Activated CD4-positive, alpha-beta memory T cell treated with anti-CD3 and anti-CD28 coated beads for 36 hours (primary cell): ENCODE measurements at regions of chr10 and their contacts with region 1.

Region 1: DNA sequence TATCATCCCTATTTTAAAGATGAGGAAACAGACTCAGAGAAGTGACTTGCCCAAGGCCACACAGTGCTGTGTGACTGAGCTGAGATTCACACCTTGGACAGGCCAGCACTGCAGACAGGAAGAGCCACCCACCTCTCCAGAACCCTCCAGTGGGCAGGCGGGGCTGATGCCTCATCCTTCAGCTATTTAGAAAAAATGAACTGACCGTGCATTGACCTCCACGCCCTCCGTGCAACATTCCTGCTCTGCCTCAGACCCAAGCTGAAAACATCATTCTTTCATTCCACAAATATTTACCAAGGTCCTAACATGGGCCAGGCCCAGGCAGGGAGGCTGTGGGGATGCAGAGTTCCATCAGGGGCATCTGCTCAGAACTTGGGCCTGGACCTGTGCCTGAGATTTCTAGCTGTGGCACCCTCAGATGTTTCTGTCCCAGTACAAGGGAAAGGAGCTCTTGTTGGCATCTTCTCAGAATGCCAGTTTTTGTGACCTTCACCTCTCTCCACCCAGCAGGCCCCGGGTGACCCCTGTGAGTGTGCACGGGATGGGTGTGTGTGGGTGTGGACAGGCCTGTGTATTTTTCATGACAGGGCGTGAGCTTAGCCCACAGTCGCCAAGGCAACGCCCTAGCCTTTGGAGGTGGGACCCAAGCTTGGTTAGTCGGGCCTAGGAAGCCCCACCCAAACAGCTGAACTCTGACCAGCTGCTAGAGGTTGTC is 6.5 kb downstream of the VSIR start:
- DNase-seq: peak; percentile 65
- H3K4me3 Mint-ChIP-seq: peak overlapping the region; percentile 38
- H3K27ac Mint-ChIP-seq: peak overlapping the region; percentile 96
- H3K4me1 Mint-ChIP-seq: peaks cover 93% of the 10 kb centered on the region
- H3K27me3 Mint-ChIP-seq: no peaks in the 10 kb centered on the region

Region 2: GRCh38 chr10:71748671-71749191 is 18.1 kb before region 1 on chr10:
- CTCF ChIA-PET with region 1: interaction called, 22 read pairs
- POLR2A ChIA-PET with region 1: interaction called, 17 read pairs
- intact Hi-C with region 1: loop called (anchors 2 kb)
- DNase-seq: peak; percentile 91
- H3K4me3 Mint-ChIP-seq: peak overlapping the region; percentile 73
- H3K27ac Mint-ChIP-seq: peak overlapping the region; percentile 98
- H3K4me1 Mint-ChIP-seq: peaks cover 97% of the 10 kb centered on the region
- H3K27me3 Mint-ChIP-seq: no peaks in the 10 kb centered on the region

Region 3: GRCh38 chr10:71756311-71757191 is 10.3 kb before region 1 on chr10:
- CTCF ChIA-PET with region 1: interaction called, 31 read pairs
- POLR2A ChIA-PET with region 1: interaction called, 108 read pairs
- intact Hi-C with region 1: loop called (anchors 1 kb)
- DNase-seq: no peak
- H3K4me3 Mint-ChIP-seq: peak overlapping the region; percentile 63
- H3K27ac Mint-ChIP-seq: peak overlapping the region; percentile 95
- H3K4me1 Mint-ChIP-seq: peaks cover 94% of the 10 kb centered on the region
- H3K27me3 Mint-ChIP-seq: no peaks in the 10 kb centered on the region

Region 4: GRCh38 chr10:71782917-71783490 is 16.1 kb after region 1 on chr10:
- CTCF ChIA-PET with region 1: no interaction called
- POLR2A ChIA-PET with region 1: no interaction called
- intact Hi-C with region 1: no loop called
- DNase-seq: no peak
- H3K4me3 Mint-ChIP-seq: no peak overlapping the region
- H3K27ac Mint-ChIP-seq: no peak overlapping the region
- H3K4me1 Mint-ChIP-seq: no peaks in the 10 kb centered on the region
- H3K27me3 Mint-ChIP-seq: no peaks in the 10 kb centered on the region